ENCODE measurements at regions of chr5 and their contacts with region 1.

Region 1: GRCh38 chr5:170338933-170339779 is 41.6 kb upstream of the LCP2 start:
- DNase-seq: peak; percentile 78
- ATAC-seq: peak; percentile 68
- H3K4me3 Mint-ChIP-seq: no peak overlapping the region
- H3K27ac Mint-ChIP-seq: peak overlapping the region; percentile 20
- H3K4me1 Mint-ChIP-seq: peaks cover 41% of the 10 kb centered on the region
- H3K27me3 Mint-ChIP-seq: no peaks in the 10 kb centered on the region

Region 2: DNA sequence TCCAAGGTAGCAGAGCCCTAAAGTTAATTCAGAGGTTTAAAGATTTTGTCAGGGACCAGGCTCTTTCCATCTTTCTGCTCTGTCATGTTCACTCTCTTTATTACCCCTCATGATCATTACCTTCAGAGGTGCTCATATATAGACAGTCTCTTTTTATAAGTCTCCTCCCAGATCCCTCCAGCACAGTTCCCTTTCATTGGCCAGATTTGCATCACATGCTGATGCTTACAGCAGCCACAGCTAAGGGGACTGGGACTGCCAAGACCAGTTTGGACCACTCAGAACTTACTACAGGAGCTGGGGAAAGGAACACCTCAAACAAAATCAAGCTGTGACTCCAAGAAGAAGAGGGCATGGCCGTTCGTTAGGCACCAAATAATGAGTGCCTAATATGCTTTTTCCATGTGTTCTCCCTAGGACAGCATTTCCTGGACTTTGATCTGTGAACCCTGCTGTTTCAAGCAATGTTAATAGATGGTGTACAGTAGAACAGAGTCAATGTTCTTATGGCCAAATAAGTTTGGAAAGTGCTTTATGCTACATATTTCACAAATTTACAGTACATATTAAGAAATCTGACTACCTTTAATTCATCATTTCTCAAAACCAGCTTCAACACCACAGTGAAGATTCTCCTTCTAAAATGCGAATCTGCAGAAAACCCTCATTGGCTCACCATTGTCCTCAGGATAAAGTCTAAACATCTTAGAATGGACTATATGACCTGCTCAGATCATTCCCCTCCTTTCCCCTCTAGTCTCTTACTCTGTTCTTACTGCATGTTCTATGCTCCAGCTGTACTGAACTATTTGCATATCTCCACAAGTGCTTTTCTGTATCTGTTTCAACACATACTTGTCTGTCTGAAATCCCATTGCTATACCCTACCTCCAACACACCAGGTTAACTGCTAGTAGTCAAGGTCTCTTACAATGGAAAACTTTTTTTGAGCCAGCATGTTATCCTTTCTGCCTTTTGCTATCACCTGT is 103.0 kb before region 1 on chr5:
- CTCF ChIA-PET with region 1: interaction called, 24 read pairs
- POLR2A ChIA-PET with region 1: no interaction called
- DNase-seq: no peak
- ATAC-seq: no peak
- H3K4me3 Mint-ChIP-seq: no peak overlapping the region
- H3K27ac Mint-ChIP-seq: no peak overlapping the region
- H3K4me1 Mint-ChIP-seq: peaks cover 3% of the 10 kb centered on the region
- H3K27me3 Mint-ChIP-seq: no peaks in the 10 kb centered on the region

Region 3: GRCh38 chr5:170262061-170263045 is 76.8 kb before region 1 on chr5:
- CTCF ChIA-PET with region 1: interaction called, 208 read pairs
- POLR2A ChIA-PET with region 1: interaction called, 15 read pairs
- DNase-seq: peak; percentile 82
- ATAC-seq: peak; percentile 68
- H3K4me3 Mint-ChIP-seq: peak overlapping the region; percentile 70
- H3K27ac Mint-ChIP-seq: peak overlapping the region; percentile 95
- H3K4me1 Mint-ChIP-seq: peaks cover 99% of the 10 kb centered on the region
- H3K27me3 Mint-ChIP-seq: no peaks in the 10 kb centered on the region

Region 4: GRCh38 chr5:170278611-170279452 is 60.3 kb before region 1 on chr5:
- CTCF ChIA-PET with region 1: interaction called, 208 read pairs
- POLR2A ChIA-PET with region 1: interaction called, 101 read pairs
- DNase-seq: peak; percentile 97
- ATAC-seq: peak; percentile 77
- H3K4me3 Mint-ChIP-seq: peak overlapping the region; percentile 72
- H3K27ac Mint-ChIP-seq: peak overlapping the region; percentile 94
- H3K4me1 Mint-ChIP-seq: peaks cover 94% of the 10 kb centered on the region
- H3K27me3 Mint-ChIP-seq: no peaks in the 10 kb centered on the region

Region 5: GRCh38 chr5:170293273-170293672 is 45.9 kb before region 1 on chr5:
- CTCF ChIA-PET with region 1: interaction called, 226 read pairs
- POLR2A ChIA-PET with region 1: interaction called, 432 read pairs
- DNase-seq: peak; percentile 92
- ATAC-seq: peak; percentile 61
- H3K4me3 Mint-ChIP-seq: peak overlapping the region; percentile 96
- H3K27ac Mint-ChIP-seq: peak overlapping the region; percentile 93
- H3K4me1 Mint-ChIP-seq: peaks cover 64% of the 10 kb centered on the region
- H3K27me3 Mint-ChIP-seq: no peaks in the 10 kb centered on the region

Region 6: GRCh38 chr5:170312666-170313065 is 26.5 kb before region 1 on chr5:
- CTCF ChIA-PET with region 1: interaction called, 14 read pairs
- POLR2A ChIA-PET with region 1: interaction called, 4 read pairs
- DNase-seq: peak; percentile 55
- ATAC-seq: peak; percentile 81
- H3K4me3 Mint-ChIP-seq: peak overlapping the region; percentile 35
- H3K27ac Mint-ChIP-seq: peak overlapping the region; percentile 39
- H3K4me1 Mint-ChIP-seq: peaks cover 41% of the 10 kb centered on the region
- H3K27me3 Mint-ChIP-seq: no peaks in the 10 kb centered on the region

Measured in activated CD8-positive, alpha-beta T cell treated with anti-CD3 and anti-CD28 coated beads, Interleukin-2, amount 10 ng/mL, durations not matched to agents 7 days and 5 days (primary cell).